ENCODE measurements at regions of chr9 and their contacts with region 1.

Region 1: GRCh38 chr9:7536310-7536939 is 263.2 kb downstream of the DMAC1 start:
- DNase-seq: no peak

Region 2: GRCh38 chr9:7402334-7403027 is 133.9 kb before region 1 on chr9:
- intact Hi-C with region 1: loop called (anchors 5 kb)
- DNase-seq: no peak

Region 3: GRCh38 chr9:7640231-7640630 is 103.8 kb after region 1 on chr9:
- intact Hi-C with region 1: no loop called
- DNase-seq: no peak

Region 4: GRCh38 chr9:7811677-7812076 is 275.3 kb after region 1 on chr9:
- intact Hi-C with region 1: no loop called
- DNase-seq: no peak